PC-9 (cell line): ENCODE measurements at regions of chr1 and their contacts with region 1.

Region 1: GRCh38 chr1:64000021-64000420 is 203.4 kb upstream of the UBE2U start:
- DNase-seq: peak; percentile 35 to 81
- H3K4me3 ChIP-seq: no peak overlapping the region
- H3K27ac ChIP-seq: peak overlapping the region; percentile 65
- H3K4me1 ChIP-seq: peaks cover 31% of the 10 kb centered on the region
- H3K27me3 ChIP-seq: no peaks in the 10 kb centered on the region
- CTCF ChIP-seq: no peak

Region 2: DNA sequence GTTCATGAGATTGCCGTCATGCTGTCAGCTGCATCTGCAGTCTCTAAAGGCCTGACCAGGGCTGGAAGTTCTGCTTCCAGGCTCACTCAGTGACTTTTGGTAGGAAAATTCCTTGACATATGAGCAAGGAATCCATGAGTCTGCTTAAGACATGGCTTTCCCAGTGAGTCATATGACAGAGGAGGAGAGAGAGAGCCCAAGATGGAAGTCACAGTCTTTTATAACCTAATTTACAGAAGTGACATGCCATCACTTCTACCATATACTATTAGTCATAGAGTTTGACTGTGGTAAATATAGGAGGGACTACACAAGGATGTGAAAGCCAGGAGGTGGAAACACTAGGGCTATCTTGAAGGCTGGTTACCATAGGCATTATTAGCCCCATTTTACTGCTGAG is 111.0 kb before region 1 on chr1:
- CTCF ChIA-PET with region 1: no interaction called
- POLR2A ChIA-PET with region 1: no interaction called
- intact Hi-C with region 1: no loop called
- DNase-seq: peak in 1 of 2 experiments; percentile 44
- H3K4me3 ChIP-seq: no peak overlapping the region
- H3K27ac ChIP-seq: no peak overlapping the region
- H3K4me1 ChIP-seq: peaks cover 26% of the 10 kb centered on the region
- H3K27me3 ChIP-seq: no peaks in the 10 kb centered on the region
- CTCF ChIP-seq: no peak

Region 3: DNA sequence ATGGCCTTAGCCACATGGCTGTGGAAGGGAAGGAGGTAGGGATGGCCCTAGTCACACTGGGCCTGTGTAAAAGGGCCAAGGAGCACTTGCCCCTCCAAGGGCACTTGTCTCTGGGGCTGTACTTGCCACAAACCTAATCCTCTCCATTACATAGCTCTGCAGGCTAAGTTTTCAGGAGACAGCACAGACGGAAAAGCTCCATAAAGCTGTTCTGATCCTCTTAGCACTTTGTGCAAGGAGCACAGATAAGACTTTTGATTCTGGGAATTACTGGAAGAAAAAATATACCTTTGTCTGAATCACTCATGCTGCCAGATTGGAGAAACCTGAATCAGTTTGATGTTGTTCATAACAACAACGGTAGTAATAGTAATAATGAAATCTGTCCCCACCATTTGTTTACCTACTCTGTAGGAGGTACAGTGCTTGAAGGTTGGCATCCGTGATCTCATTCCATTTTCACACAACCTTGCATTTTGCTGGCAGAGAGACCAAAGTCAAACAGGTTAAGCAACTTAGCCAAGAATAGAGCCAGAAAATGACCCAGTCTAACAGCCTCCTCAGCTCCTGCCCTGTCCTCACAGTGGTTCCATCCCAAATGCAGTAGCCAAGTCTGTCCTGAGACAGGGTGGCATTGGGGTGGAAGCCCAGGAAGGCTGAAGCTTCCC is 19.1 kb before region 1 on chr1:
- CTCF ChIA-PET with region 1: no interaction called
- POLR2A ChIA-PET with region 1: no interaction called
- intact Hi-C with region 1: loop called (anchors 1 kb)
- DNase-seq: peak; percentile 74 to 95
- H3K4me3 ChIP-seq: peak overlapping the region; percentile 4; the same call in 1 of the 2 replicates
- H3K27ac ChIP-seq: peak overlapping the region; percentile 81
- H3K4me1 ChIP-seq: peaks cover 40% of the 10 kb centered on the region
- H3K27me3 ChIP-seq: no peaks in the 10 kb centered on the region
- CTCF ChIP-seq: no peak

Region 4: GRCh38 chr1:64019818-64020217 is 19.8 kb after region 1 on chr1:
- CTCF ChIA-PET with region 1: no interaction called
- POLR2A ChIA-PET with region 1: no interaction called
- intact Hi-C with region 1: no loop called
- DNase-seq: peak in 1 of 2 experiments; percentile 11
- H3K4me3 ChIP-seq: no peak overlapping the region
- H3K27ac ChIP-seq: no peak overlapping the region
- H3K4me1 ChIP-seq: no peaks in the 10 kb centered on the region
- H3K27me3 ChIP-seq: no peaks in the 10 kb centered on the region
- CTCF ChIP-seq: no peak

Region 5: GRCh38 chr1:64129701-64130100 is 129.7 kb after region 1 on chr1:
- CTCF ChIA-PET with region 1: no interaction called
- POLR2A ChIA-PET with region 1: interaction called, 10 read pairs
- intact Hi-C with region 1: loop called (anchors 2 kb)
- DNase-seq: no peak
- H3K4me3 ChIP-seq: no peak overlapping the region
- H3K27ac ChIP-seq: no peak overlapping the region
- H3K4me1 ChIP-seq: peaks cover 24% of the 10 kb centered on the region
- H3K27me3 ChIP-seq: no peaks in the 10 kb centered on the region
- CTCF ChIP-seq: no peak